Heart right ventricle (tissue), 16 donors: ENCODE measurements at regions of chr5 and their contacts with region 1.

Region 1: GRCh38 chr5:81187885-81188284 is 45.2 kb upstream of the CKMT2 start:
- DNase-seq: peak; percentile 65 to 75
- ATAC-seq: peak; percentile 50 to 88 (median 78)
- H3K4me3 ChIP-seq: no peak overlapping the region
- H3K27ac ChIP-seq: peak overlapping the region in 7 of 10 donors; percentile 26 to 59 (median 42)
- H3K4me1 ChIP-seq: peaks cover 0 to 17% (median 3%) of the 10 kb centered on the region in 9 donors
- H3K27me3 ChIP-seq: no peaks in the 10 kb centered on the region
- CTCF ChIP-seq: no peak

Region 2: DNA sequence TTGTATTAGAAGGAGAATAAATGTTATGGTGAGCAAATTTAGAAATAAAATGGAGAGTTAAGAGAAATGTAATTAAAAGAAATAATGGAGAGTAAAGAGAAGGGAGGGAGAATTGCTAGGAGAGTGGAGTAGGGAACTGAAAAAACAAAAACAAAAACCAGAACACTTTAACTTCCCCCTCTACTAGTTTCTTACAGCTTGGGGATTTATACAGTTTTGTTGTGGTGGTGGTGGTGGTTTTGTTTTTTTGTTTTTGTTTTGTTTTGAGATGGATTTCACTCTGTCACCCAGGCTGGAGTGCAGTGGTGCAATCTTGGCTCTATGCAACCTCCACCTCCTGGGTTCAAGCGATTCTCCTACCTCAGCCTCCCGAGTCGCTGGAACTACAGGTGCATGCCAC is 1566.9 kb after region 1 on chr5:
- intact Hi-C with region 1: loop called in 1 of 10 experiments (anchors 5 kb)
- DNase-seq: no peak
- ATAC-seq: no peak
- H3K4me3 ChIP-seq: no peak overlapping the region
- H3K27ac ChIP-seq: no peak overlapping the region
- H3K4me1 ChIP-seq: peaks cover 0 to 4% (median 0%) of the 10 kb centered on the region in 9 donors
- H3K27me3 ChIP-seq: no peaks in the 10 kb centered on the region
- CTCF ChIP-seq: no peak